SK-N-SH (cell line): ENCODE measurements at regions of chrX and their contacts with region 1.

Region 1: DNA sequence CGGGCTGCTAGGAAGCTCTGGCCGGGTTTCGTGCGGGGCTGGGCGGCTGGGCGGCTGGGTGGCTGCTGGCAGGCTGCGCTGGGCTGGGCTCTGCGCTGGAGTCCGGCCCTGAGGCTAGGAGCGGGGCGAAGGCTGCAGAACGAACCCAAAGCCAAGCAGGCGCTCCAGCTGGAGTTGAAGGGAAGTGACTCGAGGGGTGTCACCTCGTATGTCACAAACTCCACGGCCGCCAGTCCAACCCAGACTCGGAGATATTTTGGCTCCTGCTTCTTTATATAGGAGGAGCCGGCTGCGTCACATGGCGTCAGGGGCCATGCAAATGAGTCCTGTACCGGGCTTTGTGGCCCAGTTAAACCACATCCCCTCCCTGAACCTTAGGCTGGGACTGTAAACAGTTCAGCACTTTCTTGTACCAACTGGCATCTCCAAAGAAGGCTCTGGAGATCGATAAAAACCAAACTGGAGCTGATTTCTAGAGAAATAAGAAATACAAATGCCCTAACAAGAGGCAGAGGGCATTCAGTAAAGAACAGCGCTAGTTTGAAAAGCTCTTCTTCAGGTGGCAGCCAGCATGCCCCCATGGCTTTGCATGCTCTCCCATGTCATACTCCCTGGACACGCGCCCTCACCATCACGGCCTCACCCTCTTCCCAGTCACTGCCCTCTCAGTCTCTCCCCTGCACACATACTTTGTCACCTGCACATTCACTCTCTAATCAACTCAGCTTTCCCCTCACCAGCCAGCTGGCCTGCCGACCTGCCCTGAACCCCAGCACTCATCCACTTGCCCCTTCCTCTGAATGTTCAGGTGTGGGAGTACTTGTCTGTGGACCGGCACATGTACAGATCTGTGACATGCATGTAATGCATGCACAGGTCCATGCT is 58.5 kb downstream of the TSC22D3 start:
- DNase-seq: peak; percentile 60
- H3K4me3 ChIP-seq: peak overlapping the region; percentile 60 to 70
- H3K27ac ChIP-seq: peak overlapping the region; percentile 65 to 74
- H3K4me1 ChIP-seq: peaks cover 6 to 13% of the 10 kb centered on the region in 2 experiments; a peak in 2 of 4 replicates
- H3K27me3 ChIP-seq: peaks cover 27% of the 10 kb centered on the region; the same call in 1 of the 2 replicates
- CTCF ChIP-seq: no peak
- EP300 ChIP-seq: no peak
- RAD21 ChIP-seq: no peak

Region 2: GRCh38 chrX:107659768-107660167 is 57.3 kb before region 1 on chrX:
- CTCF ChIA-PET with region 1: interaction called, 14 read pairs
- POLR2A ChIA-PET with region 1: no interaction called
- DNase-seq: peak; percentile 32
- H3K4me3 ChIP-seq: no peak overlapping the region
- H3K27ac ChIP-seq: no peak overlapping the region
- H3K4me1 ChIP-seq: no peaks in the 10 kb centered on the region; a peak in 1 of 4 replicates
- H3K27me3 ChIP-seq: no peaks in the 10 kb centered on the region; the same call in 1 of the 2 replicates
- CTCF ChIP-seq: peak; percentile 76
- EP300 ChIP-seq: no peak
- RAD21 ChIP-seq: peak; percentile 74

Region 3: GRCh38 chrX:107672955-107673378 is 44.1 kb before region 1 on chrX:
- CTCF ChIA-PET with region 1: interaction called, 14 read pairs
- POLR2A ChIA-PET with region 1: interaction called, 3 read pairs
- DNase-seq: peak; percentile 67
- H3K4me3 ChIP-seq: no peak overlapping the region
- H3K27ac ChIP-seq: no peak overlapping the region
- H3K4me1 ChIP-seq: no peaks in the 10 kb centered on the region
- H3K27me3 ChIP-seq: peaks cover 20% of the 10 kb centered on the region
- CTCF ChIP-seq: peak; percentile 63
- EP300 ChIP-seq: no peak
- RAD21 ChIP-seq: peak; percentile 64

Region 4: DNA sequence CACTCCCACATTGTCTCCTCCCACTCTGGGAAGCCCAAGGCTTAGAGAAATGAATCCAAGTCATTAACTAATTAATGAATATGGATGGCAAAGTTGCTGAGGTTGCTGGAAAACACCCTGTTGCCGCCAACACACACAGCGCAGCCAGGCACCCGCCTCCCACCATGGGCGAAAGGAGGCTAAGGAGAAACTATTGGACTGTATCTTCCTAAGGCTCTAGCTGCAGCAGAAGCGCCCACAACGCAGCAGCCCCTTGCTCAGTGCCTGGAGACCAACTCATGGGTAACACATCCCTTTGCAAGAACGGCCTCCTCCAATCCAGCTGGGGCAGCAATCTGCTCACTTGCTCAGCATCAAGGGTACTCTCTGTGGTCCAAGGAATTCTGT is 24.3 kb after region 1 on chrX:
- CTCF ChIA-PET with region 1: interaction called, 4 read pairs
- POLR2A ChIA-PET with region 1: interaction called, 13 read pairs
- DNase-seq: no peak
- H3K4me3 ChIP-seq: no peak overlapping the region
- H3K27ac ChIP-seq: no peak overlapping the region
- H3K4me1 ChIP-seq: peaks cover 0 to 11% of the 10 kb centered on the region in 2 experiments; a peak in 1 of 4 replicates
- H3K27me3 ChIP-seq: peaks cover 61% of the 10 kb centered on the region
- CTCF ChIP-seq: no peak
- EP300 ChIP-seq: no peak
- RAD21 ChIP-seq: no peak